Endothelial cell of umbilical vein (primary cell): ENCODE measurements at regions of chr22 and their contacts with region 1.

Region 1: DNA sequence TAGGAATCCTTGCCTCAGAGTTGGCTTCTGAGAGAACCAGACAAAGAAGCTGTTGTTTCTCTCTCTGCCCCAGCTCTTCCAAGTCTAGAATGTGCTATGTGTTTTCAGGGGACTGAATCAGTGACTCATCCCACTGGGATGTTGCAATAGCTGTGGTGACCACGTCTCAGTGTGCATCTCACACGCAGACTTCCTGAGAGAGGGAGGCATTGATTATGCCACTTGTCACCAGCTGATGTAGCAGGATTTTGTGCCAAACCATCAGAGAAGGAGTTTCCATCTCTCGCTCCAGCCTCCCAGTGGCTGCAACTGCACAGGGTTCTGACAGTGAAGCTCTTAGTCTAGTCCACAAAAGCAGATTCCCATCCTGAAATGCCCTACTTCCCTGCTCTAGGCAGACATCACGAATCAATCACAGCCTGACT is 455.8 kb downstream of the MIAT start:
- DNase-seq: peak; percentile 86
- H3K4me3 ChIP-seq: no peak overlapping the region
- H3K27ac ChIP-seq: peak overlapping the region; percentile 93
- H3K4me1 ChIP-seq: peaks cover 63% of the 10 kb centered on the region
- H3K27me3 ChIP-seq: no peaks in the 10 kb centered on the region
- CTCF ChIP-seq: no peak
- POLR2A ChIP-seq: no peak

Region 2: GRCh38 chr22:26679003-26679629 is 434.1 kb before region 1 on chr22:
- CTCF ChIA-PET with region 1: interaction called, 3 read pairs
- POLR2A ChIA-PET with region 1: no interaction called
- dilution Hi-C with region 1: no loop called
- intact Hi-C with region 1: loop called (anchors 5 kb)
- DNase-seq: peak; percentile 84
- H3K4me3 ChIP-seq: no peak overlapping the region
- H3K27ac ChIP-seq: no peak overlapping the region
- H3K4me1 ChIP-seq: peaks cover 13% of the 10 kb centered on the region
- H3K27me3 ChIP-seq: no peaks in the 10 kb centered on the region
- CTCF ChIP-seq: peak; percentile 93 to 96
- POLR2A ChIP-seq: no peak

Region 3: GRCh38 chr22:27022274-27022895 is 90.8 kb before region 1 on chr22:
- CTCF ChIA-PET with region 1: no interaction called
- POLR2A ChIA-PET with region 1: no interaction called
- dilution Hi-C with region 1: no loop called
- intact Hi-C with region 1: no loop called
- DNase-seq: no peak
- H3K4me3 ChIP-seq: no peak overlapping the region
- H3K27ac ChIP-seq: no peak overlapping the region
- H3K4me1 ChIP-seq: no peaks in the 10 kb centered on the region
- H3K27me3 ChIP-seq: peaks cover 3% of the 10 kb centered on the region in 2 experiments
- CTCF ChIP-seq: no peak
- POLR2A ChIP-seq: no peak

Region 4: DNA sequence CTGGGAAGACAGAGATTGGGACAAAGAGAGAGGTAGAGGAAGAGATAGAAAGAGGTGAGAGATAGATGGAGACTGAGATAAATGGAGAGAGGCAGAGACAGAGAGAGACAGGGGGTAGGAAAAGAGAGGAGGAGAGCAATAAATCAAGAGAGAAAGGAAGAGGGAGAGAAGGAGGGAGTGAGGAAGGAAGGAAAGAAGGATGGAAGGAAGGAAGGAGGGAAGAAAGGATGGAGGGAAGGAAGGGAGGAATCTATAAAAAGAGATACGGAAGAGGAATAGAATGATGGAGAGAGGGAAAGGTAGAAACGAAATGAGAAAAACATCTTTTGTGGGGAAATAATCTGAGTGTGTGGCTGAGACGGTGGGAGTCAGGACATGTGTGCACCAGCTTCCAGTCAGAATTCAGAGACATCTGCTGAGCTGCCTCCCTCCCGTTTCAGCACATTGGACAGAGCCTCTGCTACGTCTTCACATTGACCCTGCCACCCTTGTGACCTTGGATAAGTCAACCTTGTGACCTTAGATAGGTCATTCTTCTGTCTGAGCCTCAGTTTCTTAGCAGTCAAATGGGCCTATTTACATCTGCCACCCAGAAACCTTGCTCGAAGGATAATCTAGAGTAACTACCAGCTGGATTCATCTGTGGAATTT is 38.1 kb before region 1 on chr22:
- CTCF ChIA-PET with region 1: no interaction called
- POLR2A ChIA-PET with region 1: no interaction called
- dilution Hi-C with region 1: no loop called
- intact Hi-C with region 1: no loop called
- DNase-seq: no peak
- H3K4me3 ChIP-seq: no peak overlapping the region
- H3K27ac ChIP-seq: no peak overlapping the region
- H3K4me1 ChIP-seq: no peaks in the 10 kb centered on the region
- H3K27me3 ChIP-seq: peaks cover 2 to 9% of the 10 kb centered on the region in 2 experiments
- CTCF ChIP-seq: no peak
- POLR2A ChIP-seq: no peak

Region 5: GRCh38 chr22:27134315-27134701 is 21.1 kb after region 1 on chr22:
- CTCF ChIA-PET with region 1: interaction called, 6 read pairs
- POLR2A ChIA-PET with region 1: interaction called, 3 read pairs
- dilution Hi-C with region 1: no loop called
- intact Hi-C with region 1: loop called (anchors 1 kb)
- DNase-seq: peak; percentile 60
- H3K4me3 ChIP-seq: no peak overlapping the region
- H3K27ac ChIP-seq: peak overlapping the region; percentile 52
- H3K4me1 ChIP-seq: peaks cover 30% of the 10 kb centered on the region
- H3K27me3 ChIP-seq: no peaks in the 10 kb centered on the region
- CTCF ChIP-seq: no peak
- POLR2A ChIP-seq: no peak

Region 6: GRCh38 chr22:27203276-27203660 is 90.0 kb after region 1 on chr22:
- CTCF ChIA-PET with region 1: no interaction called
- POLR2A ChIA-PET with region 1: no interaction called
- dilution Hi-C with region 1: no loop called
- intact Hi-C with region 1: loop called (anchors 2 kb)
- DNase-seq: no peak
- H3K4me3 ChIP-seq: no peak overlapping the region
- H3K27ac ChIP-seq: peak overlapping the region; percentile 29
- H3K4me1 ChIP-seq: peaks cover 12% of the 10 kb centered on the region
- H3K27me3 ChIP-seq: no peaks in the 10 kb centered on the region
- CTCF ChIP-seq: no peak
- POLR2A ChIP-seq: no peak

Region 7: GRCh38 chr22:27299181-27300085 is 186.2 kb after region 1 on chr22:
- CTCF ChIA-PET with region 1: no interaction called
- POLR2A ChIA-PET with region 1: no interaction called
- dilution Hi-C with region 1: no loop called
- intact Hi-C with region 1: loop called (anchors 5 kb)
- DNase-seq: peak; percentile 85
- H3K4me3 ChIP-seq: peak overlapping the region in 2 of 3 experiments; percentile 3 to 34
- H3K27ac ChIP-seq: peak overlapping the region; percentile 40
- H3K4me1 ChIP-seq: peaks cover 27% of the 10 kb centered on the region
- H3K27me3 ChIP-seq: no peaks in the 10 kb centered on the region
- CTCF ChIP-seq: no peak
- POLR2A ChIP-seq: peak; percentile 54